ENCODE measurements at regions of chr10 and their contacts with region 1.

Region 1: GRCh38 chr10:63157845-63158624 is 24.9 kb downstream of the NRBF2 start:
- DNase-seq: peak; percentile 71
- H3K4me3 ChIP-seq: no peak overlapping the region
- CTCF ChIP-seq: peak; percentile 61

Region 2: DNA sequence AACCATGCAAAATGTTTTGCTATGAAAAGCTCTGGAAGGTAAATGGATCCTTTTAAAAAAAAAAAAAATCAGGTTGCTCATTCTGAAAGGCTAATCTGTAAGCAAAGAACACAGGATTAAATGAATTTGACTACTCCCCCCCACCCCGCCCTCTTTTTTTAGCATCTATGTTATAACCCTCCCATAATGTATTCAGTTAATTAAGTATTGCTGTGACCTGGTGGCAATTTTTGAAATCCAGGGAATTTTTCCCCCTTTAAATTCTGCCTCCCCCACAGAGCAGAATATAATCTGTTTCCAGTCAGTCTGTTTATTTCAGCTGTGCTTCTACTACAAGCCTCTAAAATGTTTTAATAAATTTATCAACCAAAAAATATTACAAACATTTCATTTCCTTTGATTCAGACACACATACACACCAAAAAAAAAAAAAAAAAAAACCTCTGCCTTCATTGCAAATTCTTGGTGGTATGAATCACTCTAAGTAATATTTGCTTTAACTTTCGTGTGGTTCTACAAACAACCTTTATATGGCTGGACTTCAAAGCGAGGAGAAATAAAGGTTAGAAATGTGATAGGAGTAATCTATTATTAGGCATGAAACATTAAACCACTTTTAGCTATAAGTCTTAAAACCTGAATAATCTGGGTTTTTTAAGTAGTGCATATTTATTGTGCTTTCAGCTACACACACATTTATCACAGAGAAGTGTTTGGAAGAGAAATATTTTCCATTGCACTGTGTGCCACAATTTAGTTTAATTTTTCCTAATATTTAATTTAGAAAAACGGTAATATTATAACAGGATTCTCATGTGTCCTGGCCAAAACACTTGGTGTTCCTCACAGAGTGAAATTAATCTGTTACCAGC is 1320.9 kb before region 1 on chr10:
- CTCF ChIA-PET with region 1: no interaction called
- POLR2A ChIA-PET with region 1: no interaction called
- DNase-seq: no peak
- H3K4me3 ChIP-seq: no peak overlapping the region
- CTCF ChIP-seq: no peak

Region 3: GRCh38 chr10:62554632-62555199 is 603.3 kb before region 1 on chr10:
- CTCF ChIA-PET with region 1: interaction called, 14 read pairs
- POLR2A ChIA-PET with region 1: no interaction called
- DNase-seq: peak; percentile 34
- H3K4me3 ChIP-seq: no peak overlapping the region
- CTCF ChIP-seq: peak; percentile 57

Region 4: GRCh38 chr10:62594093-62594520 is 563.9 kb before region 1 on chr10:
- CTCF ChIA-PET with region 1: interaction called, 27 read pairs
- POLR2A ChIA-PET with region 1: no interaction called
- DNase-seq: no peak
- H3K4me3 ChIP-seq: no peak overlapping the region
- CTCF ChIP-seq: peak; percentile 93

Region 5: DNA sequence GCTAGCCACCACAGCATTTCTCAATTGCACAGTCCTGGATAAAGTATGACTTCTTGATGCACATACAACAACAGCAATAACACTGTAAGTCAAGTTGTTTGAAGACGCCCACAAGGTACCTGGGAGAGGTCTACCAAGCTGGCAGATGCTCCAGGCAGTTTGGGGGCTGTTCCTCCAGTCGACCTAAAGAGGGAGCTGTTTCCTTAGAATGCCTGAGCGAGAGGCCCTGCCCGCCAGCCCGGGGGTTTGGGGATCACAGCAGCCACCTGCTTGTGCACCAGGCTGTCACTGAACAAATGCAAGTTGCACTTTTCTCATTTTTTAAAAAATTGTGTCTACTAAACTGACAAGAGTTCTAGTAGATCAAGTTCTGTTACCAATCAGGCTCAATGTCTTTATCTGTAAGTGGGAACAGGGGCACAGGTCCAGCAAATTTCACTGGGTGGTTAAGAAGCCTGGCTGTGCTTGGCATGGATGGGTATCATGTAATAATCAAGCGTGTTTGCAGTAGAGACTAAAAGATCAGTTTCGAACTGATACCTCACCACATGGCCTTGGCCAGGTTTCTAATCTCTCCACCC is 547.3 kb before region 1 on chr10:
- CTCF ChIA-PET with region 1: interaction called, 30 read pairs
- POLR2A ChIA-PET with region 1: no interaction called
- DNase-seq: no peak
- H3K4me3 ChIP-seq: no peak overlapping the region
- CTCF ChIP-seq: peak; percentile 85

Region 6: DNA sequence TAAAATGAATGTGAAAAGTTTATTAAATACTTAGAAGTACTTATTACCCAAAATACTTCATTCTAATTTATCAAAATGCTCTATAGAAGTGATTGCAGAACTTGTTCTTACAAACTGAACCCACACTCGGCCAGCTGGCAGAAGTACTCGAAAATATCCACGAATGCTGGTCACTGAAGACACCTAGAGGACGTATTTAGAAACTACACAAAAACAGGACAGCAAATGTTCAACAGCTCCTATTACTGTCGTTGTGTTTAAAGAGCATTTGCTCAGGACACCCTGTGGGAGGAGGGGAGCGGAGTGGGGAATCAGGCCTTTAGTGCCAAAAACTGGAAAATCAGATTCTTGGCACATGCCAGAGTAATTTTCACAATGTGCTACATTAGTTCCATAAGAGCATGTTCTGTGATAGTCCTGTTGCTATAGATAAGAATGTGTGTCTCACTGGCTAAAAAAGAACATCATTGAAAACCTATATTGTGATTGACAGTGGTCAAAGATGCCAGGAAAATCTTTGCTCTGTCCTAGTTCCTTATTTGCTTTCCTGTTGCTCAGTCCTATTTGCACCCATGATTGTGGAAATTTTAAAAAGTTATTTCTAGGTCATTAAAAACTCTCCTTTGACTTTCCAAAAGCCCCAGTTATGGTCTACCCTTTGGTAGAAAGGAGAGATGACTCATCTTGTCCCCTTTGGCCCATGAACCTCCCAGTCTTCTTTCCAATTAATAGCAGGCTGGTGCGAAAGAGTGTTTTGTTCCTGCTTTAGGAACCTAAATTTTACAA is 73.9 kb before region 1 on chr10:
- CTCF ChIA-PET with region 1: interaction called, 20 read pairs
- POLR2A ChIA-PET with region 1: no interaction called
- DNase-seq: peak; percentile 29
- H3K4me3 ChIP-seq: no peak overlapping the region
- CTCF ChIP-seq: peak; percentile 60

Region 7: GRCh38 chr10:63133056-63133820 is 24.8 kb before region 1 on chr10 and contains the start of gene NRBF2:
- CTCF ChIA-PET with region 1: interaction called, 14 read pairs
- POLR2A ChIA-PET with region 1: interaction called, 4 read pairs
- DNase-seq: peak; percentile 84
- H3K4me3 ChIP-seq: peak within 1 kb of the TSS; percentile 82
- CTCF ChIP-seq: peak; percentile 40

Region 8: GRCh38 chr10:63145782-63146181 is 12.3 kb before region 1 on chr10:
- CTCF ChIA-PET with region 1: interaction called, 51 read pairs
- POLR2A ChIA-PET with region 1: no interaction called
- DNase-seq: no peak
- H3K4me3 ChIP-seq: no peak overlapping the region
- CTCF ChIP-seq: no peak

Measured in AG04449 (cell line).